ENCODE measurements at regions of chr4 and their contacts with region 1.

Region 1: GRCh38 chr4:82801910-82802521 is 3.4 kb upstream of the SCD5 start:
- DNase-seq: peak in 4 of 7 donors; percentile 49 to 72 (median 58)
- H3K4me3 ChIP-seq: no peak overlapping the region
- H3K27ac ChIP-seq: no peak overlapping the region
- H3K4me1 ChIP-seq: peaks cover 7 to 9% of the 10 kb centered on the region in 2 donors
- H3K27me3 ChIP-seq: no peaks in the 10 kb centered on the region
- CTCF ChIP-seq: peak; percentile 19 to 52 (median 37)
- POLR2A ChIP-seq: no peak

Region 2: DNA sequence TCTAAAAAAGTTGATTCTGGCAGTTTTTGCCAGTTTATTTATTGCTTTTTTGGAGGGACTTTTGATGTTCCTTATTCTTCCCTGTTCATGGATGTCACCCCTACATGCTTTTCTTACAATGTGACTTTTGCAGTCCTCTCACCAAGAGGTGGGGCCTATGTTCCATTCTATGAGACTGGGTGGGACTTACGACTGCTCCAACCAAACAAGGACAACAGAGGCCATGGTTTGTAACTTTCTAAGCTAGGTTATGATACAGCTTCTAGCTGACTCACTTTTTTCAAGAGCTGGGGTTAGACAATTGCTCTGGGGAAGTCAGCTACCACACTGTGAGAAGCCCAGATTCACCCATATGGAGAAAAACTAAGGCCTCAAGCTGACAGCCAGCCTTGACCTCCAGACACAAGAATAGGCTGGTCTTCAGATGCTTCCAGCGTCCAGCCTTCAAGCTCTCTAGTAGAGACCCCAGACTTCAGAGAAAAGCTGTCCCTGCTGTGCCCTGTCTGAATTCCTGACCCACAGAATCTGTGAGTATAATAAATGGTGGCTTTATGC is 332.1 kb before region 1 on chr4:
- intact Hi-C with region 1: loop called in 1 of 2 experiments (anchors 10 kb)
- DNase-seq: peak in 3 of 7 donors; percentile 14 to 28 (median 20)
- H3K4me3 ChIP-seq: no peak overlapping the region
- H3K27ac ChIP-seq: no peak overlapping the region
- H3K4me1 ChIP-seq: no peaks in the 10 kb centered on the region
- H3K27me3 ChIP-seq: no peaks in the 10 kb centered on the region
- CTCF ChIP-seq: no peak
- POLR2A ChIP-seq: no peak

Region 3: GRCh38 chr4:82677321-82677720 is 124.7 kb before region 1 on chr4:
- intact Hi-C with region 1: no loop called
- DNase-seq: no peak
- H3K4me3 ChIP-seq: no peak overlapping the region
- H3K27ac ChIP-seq: no peak overlapping the region
- H3K4me1 ChIP-seq: peaks cover 0 to 5% of the 10 kb centered on the region in 2 donors
- H3K27me3 ChIP-seq: no peaks in the 10 kb centered on the region
- CTCF ChIP-seq: no peak
- POLR2A ChIP-seq: no peak

Region 4: GRCh38 chr4:82842593-82842992 is 40.6 kb after region 1 on chr4:
- intact Hi-C with region 1: no loop called
- DNase-seq: no peak
- H3K4me3 ChIP-seq: no peak overlapping the region
- H3K27ac ChIP-seq: no peak overlapping the region
- H3K4me1 ChIP-seq: peaks cover 0 to 5% of the 10 kb centered on the region in 2 donors
- H3K27me3 ChIP-seq: no peaks in the 10 kb centered on the region
- CTCF ChIP-seq: peak in 2 of 6 experiments; percentile 21 to 25
- POLR2A ChIP-seq: no peak